Activated B cell treated with CpG ODN at 0.5 μM for 24 hours (primary cell): ENCODE measurements at regions of chr15 and their contacts with region 1.

Region 1: GRCh38 chr15:64093627-64094417 is at the start of gene CIAO2A:
- DNase-seq: peak; percentile 78
- ATAC-seq: peak; percentile 72
- H3K4me3 Mint-ChIP-seq: peak within 1 kb of the TSS; percentile 99
- H3K27ac Mint-ChIP-seq: peak within 1 kb of the TSS; percentile 98
- H3K4me1 Mint-ChIP-seq: peaks cover 93% of the 10 kb centered on the region
- H3K27me3 Mint-ChIP-seq: no peaks in the 10 kb centered on the region
- CTCF ChIP-seq: no peak
- total RNA-seq, gene CIAO2A: 58.4 and 63.2 TPM in 2 replicates

Region 2: DNA sequence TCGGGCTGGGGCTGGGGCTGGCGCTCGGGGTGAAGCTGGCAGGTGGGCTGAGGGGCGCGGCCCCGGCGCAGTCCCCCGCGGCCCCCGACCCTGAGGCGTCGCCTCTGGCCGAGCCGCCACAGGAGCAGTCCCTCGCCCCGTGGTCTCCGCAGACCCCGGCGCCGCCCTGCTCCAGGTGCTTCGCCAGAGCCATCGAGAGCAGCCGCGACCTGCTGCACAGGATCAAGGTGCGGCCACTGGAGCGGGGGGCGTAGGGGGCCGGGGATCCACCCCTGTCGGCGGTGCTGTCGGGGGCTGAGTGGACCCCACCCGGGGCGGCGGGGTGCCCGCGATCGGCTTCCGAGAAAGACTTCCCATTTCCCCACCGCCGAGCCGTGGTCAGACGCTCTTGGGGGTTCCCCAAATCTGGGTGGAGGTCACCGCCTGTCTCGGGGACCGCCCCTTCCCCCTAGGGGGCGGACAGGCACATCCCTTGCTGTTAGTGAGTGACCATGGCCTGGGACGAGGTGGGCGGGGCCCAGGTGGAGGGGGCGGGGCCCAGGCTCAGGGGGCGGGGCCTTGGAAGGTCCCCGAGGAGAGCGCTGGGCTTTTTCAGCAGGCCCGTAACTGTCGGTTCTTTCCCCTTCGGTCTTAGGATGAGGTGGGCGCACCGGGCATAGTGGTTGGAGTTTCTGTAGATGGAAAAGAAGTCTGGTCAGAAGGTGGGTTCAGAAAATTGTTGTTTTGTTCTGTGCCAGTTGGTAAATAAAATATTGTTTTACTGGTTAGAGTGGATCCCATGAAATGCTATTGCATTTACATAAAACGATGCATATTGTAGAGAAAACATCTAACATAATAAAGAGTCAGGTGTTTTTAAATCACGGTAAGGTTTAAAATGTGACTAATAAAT is 971.6 kb before region 1 on chr15:
- CTCF ChIA-PET with region 1: no interaction called
- POLR2A ChIA-PET with region 1: no interaction called
- intact Hi-C with region 1: loop called (anchors 10 kb)
- DNase-seq: peak; percentile 77
- ATAC-seq: peak; percentile 88
- H3K4me3 Mint-ChIP-seq: peak overlapping the region; percentile 86
- H3K27ac Mint-ChIP-seq: peak overlapping the region; percentile 86
- H3K4me1 Mint-ChIP-seq: peaks cover 15% of the 10 kb centered on the region
- H3K27me3 Mint-ChIP-seq: no peaks in the 10 kb centered on the region
- CTCF ChIP-seq: no peak

Region 3: DNA sequence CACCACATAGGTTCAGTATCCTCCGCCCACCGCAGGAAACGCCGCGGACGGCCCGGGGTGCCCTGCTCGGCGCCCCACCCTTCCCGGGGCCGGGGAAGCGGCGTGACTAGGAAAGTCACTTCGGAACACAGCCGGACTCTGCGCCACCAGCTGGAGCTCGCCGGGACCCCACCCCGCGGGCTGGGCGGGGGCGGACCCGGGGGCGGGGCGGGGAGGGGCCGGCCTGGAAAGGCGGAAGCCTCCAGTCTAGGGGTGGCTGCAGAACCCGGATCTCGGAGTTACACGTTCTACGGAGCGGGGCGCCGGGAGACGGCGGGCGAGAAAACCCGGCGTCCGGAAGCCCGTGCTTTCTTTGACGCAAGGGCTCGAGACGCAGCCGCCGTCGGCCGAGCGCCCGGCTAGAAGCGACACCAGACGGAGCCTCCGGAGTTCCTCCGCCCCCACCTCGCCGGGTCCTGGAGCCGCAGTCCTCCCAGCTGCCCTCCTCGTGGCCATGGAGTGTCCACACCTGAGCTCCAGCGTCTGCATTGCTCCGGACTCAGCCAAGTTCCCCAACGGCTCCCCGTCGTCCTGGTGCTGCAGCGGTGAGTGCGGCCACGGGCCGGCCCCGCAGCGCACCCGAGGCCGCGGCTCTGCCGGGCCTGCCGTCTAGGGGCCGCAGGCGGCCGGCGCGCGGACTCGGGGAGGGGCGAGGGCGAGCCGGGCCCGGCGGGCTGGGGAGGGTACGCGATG is 589.4 kb before region 1 on chr15 and contains the start of gene USP3:
- CTCF ChIA-PET with region 1: no interaction called
- POLR2A ChIA-PET with region 1: interaction called, 11 read pairs
- intact Hi-C with region 1: loop called (anchors 1 kb)
- DNase-seq: peak; percentile 93
- ATAC-seq: peak; percentile 68
- H3K4me3 Mint-ChIP-seq: peak within 1 kb of the TSS; percentile 93
- H3K27ac Mint-ChIP-seq: peak within 1 kb of the TSS; percentile 98
- H3K4me1 Mint-ChIP-seq: peaks cover 81% of the 10 kb centered on the region
- H3K27me3 Mint-ChIP-seq: no peaks in the 10 kb centered on the region
- CTCF ChIP-seq: no peak
- total RNA-seq, gene USP3: 92.7 and 110 TPM in 2 replicates

Region 4: DNA sequence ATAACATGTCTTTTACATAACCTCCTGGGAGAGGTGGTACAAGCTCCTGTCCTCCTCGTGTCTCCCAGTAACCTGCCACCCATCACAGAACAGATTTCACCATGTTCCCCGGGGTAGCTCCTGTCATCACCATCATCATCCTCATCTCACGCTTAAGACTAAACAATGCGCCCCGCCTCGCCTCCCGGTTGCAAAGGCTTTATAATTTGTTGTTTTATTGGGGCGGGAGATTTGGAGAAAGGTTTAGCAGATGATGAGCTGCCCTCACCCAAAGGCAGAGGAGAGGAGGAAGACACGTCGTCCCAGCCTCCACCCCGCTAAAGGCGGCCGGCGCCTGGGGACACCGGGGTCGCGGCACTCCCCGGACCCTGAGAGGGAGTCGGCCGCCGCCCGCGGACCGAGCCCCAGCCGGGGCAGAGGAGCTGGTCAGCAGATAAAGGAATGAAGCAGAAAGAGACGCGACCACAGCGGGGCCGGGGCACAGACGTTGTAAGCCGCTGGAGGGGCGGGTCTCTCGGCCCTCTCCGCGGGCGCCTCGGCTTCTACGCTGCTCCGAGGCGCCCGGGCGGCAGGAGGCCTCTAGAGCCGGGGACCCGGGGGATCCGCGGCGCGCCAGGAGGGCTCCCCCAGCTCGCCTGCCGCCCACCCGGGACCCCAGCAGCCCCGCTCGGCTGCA is 260.7 kb before region 1 on chr15:
- CTCF ChIA-PET with region 1: no interaction called
- POLR2A ChIA-PET with region 1: interaction called, 12 read pairs
- intact Hi-C with region 1: loop called (anchors 2 kb)
- DNase-seq: peak; percentile 44
- ATAC-seq: peak; percentile 43
- H3K4me3 Mint-ChIP-seq: peak overlapping the region; percentile 97
- H3K27ac Mint-ChIP-seq: peak overlapping the region; percentile 74
- H3K4me1 Mint-ChIP-seq: peaks cover 48% of the 10 kb centered on the region
- H3K27me3 Mint-ChIP-seq: no peaks in the 10 kb centered on the region
- CTCF ChIP-seq: no peak

Region 5: DNA sequence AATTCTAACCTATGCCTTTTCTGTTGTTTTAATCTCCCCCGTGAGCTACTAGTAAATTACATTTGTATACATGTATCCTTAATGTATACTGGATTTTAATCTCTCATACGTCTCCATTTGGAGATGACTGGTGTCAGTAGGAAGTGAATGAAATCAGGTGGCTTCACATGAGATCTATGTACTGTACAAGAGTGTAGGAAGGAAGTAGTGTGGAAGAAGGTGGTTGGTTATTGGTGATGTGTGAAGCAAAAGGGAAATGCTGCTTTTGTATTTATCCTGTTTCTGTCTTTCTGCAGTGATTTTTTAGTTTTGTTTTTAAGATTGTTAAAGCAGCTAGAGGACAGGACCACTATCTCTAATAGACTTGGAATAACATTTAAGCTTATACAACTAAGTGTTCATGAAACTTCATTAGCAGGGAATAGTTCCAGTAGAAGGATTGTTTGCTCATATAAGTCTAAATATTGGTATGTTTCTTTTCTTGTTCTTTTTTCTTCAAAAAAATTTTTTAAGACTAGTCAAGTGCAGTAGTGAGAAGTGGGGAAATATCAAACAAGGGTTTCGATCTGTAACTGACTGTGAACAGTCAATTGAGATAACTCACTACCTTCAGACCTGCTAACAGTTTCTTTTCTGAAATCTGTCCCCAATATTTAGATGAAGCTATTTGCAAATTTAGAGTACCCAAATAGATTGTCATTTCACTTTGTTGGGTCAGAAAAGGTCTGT is 17.3 kb after region 1 on chr15:
- CTCF ChIA-PET with region 1: interaction called, 6 read pairs
- POLR2A ChIA-PET with region 1: interaction called, 9 read pairs
- intact Hi-C with region 1: loop called (anchors 1 kb)
- DNase-seq: no peak
- ATAC-seq: peak; percentile 85
- H3K4me3 Mint-ChIP-seq: peak overlapping the region; percentile 68
- H3K27ac Mint-ChIP-seq: peak overlapping the region; percentile 83
- H3K4me1 Mint-ChIP-seq: peaks cover 72% of the 10 kb centered on the region
- H3K27me3 Mint-ChIP-seq: no peaks in the 10 kb centered on the region
- CTCF ChIP-seq: no peak

Region 6: GRCh38 chr15:64162870-64163658 is 69.2 kb after region 1 on chr15 and contains the start of gene PPIB:
- CTCF ChIA-PET with region 1: no interaction called
- POLR2A ChIA-PET with region 1: interaction called, 23 read pairs
- intact Hi-C with region 1: loop called (anchors 1 kb)
- DNase-seq: peak; percentile 91
- ATAC-seq: peak; percentile 92
- H3K4me3 Mint-ChIP-seq: peak within 1 kb of the TSS; percentile 88
- H3K27ac Mint-ChIP-seq: peak within 1 kb of the TSS; percentile 99
- H3K4me1 Mint-ChIP-seq: peaks cover 55% of the 10 kb centered on the region
- H3K27me3 Mint-ChIP-seq: no peaks in the 10 kb centered on the region
- CTCF ChIP-seq: no peak
- total RNA-seq, gene PPIB: 225 and 227 TPM in 2 replicates

Region 7: GRCh38 chr15:64841258-64842095 is 747.7 kb after region 1 on chr15 and contains the start of gene PLEKHO2:
- CTCF ChIA-PET with region 1: no interaction called
- POLR2A ChIA-PET with region 1: no interaction called
- intact Hi-C with region 1: loop called (anchors 10 kb)
- DNase-seq: peak; percentile 78
- ATAC-seq: peak; percentile 75
- H3K4me3 Mint-ChIP-seq: peak within 1 kb of the TSS; percentile 95
- H3K27ac Mint-ChIP-seq: peak within 1 kb of the TSS; percentile 75
- H3K4me1 Mint-ChIP-seq: peaks cover 53% of the 10 kb centered on the region
- H3K27me3 Mint-ChIP-seq: no peaks in the 10 kb centered on the region
- CTCF ChIP-seq: no peak
- total RNA-seq, gene PLEKHO2: 36.5 and 38.1 TPM in 2 replicates